ENCODE measurements at regions of chr14 and their contacts with region 1.

Region 1: DNA sequence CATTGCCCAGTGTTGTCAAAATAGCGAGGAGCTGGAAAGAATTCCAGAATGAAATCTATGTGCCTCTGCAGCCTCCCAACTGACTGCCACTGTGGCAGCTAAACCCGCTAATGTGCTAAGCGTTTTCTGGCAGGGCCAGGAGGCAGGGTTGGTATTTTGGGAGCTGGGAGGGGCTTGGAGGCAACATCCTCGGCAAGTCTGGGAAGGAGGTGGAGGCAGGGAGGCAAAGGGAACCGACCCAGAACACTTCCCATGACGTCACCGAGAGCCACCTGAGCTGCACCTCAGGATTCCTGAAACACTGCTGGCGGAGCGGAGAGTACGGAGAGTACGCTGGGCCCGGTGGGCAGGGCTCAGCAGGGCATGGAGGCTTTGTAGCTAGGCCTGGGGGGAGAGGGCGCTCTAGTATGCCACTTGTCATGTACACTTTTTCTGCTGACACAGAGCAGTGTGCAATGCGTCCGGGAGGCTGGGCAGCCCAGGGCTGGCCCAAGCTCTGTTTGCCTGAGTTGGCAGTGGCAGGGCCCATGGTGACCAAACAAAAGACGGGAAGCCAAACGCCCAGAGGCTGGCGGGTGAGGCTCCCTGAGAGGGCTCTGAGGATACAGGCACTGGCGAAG is 81.5 kb downstream of the DPF3 start:
- DNase-seq: no peak
- H3K4me3 Mint-ChIP-seq: no peak overlapping the region
- H3K27ac Mint-ChIP-seq: no peak overlapping the region
- H3K4me1 Mint-ChIP-seq: peaks cover 36% of the 10 kb centered on the region
- H3K27me3 Mint-ChIP-seq: no peaks in the 10 kb centered on the region

Region 2: DNA sequence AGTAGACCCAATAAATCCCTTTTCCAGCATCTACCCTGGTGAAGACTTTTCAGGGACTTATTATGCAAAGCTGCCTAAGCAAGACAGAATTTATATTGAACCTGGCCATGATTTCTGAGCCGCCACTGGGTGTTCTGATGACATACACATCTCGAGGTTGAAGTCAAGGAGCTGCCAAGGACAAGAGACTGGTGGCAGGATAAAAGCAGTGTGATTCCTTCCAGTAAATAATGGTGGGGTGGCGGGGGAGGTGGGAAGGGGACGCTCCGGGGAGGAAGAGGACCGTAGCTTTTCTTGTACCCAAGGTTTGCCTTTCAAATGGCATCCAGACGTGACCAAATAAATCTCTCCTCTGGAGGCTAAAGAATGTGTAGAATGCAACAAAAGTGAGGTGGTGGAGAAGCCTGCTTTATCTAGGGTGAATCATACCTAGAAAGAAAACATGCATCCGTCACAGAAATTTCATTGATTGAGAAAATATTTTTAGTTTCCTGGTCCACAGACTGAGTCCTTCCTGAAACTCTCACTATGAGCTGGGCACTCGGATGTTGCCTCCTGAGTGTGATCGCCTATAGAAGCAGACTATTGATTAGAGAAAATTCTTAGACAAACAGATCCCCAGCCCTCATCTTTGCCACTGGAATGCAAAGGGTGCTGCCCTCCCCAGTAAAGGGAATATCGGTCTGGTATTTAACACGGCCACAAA is 30.8 kb before region 1 on chr14:
- CTCF ChIA-PET with region 1: no interaction called
- POLR2A ChIA-PET with region 1: no interaction called
- intact Hi-C with region 1: no loop called
- DNase-seq: no peak
- H3K4me3 Mint-ChIP-seq: no peak overlapping the region
- H3K27ac Mint-ChIP-seq: no peak overlapping the region
- H3K4me1 Mint-ChIP-seq: peaks cover 3% of the 10 kb centered on the region
- H3K27me3 Mint-ChIP-seq: no peaks in the 10 kb centered on the region

Region 3: GRCh38 chr14:72893636-72894321 is 81.4 kb after region 1 on chr14 and contains the start of gene DPF3:
- CTCF ChIA-PET with region 1: no interaction called
- POLR2A ChIA-PET with region 1: interaction called, 4 read pairs
- intact Hi-C with region 1: loop called (anchors 5 kb)
- DNase-seq: peak; percentile 94
- H3K4me3 Mint-ChIP-seq: peak within 1 kb of the TSS; percentile 88
- H3K27ac Mint-ChIP-seq: peak within 1 kb of the TSS; percentile 40
- H3K4me1 Mint-ChIP-seq: peaks cover 20% of the 10 kb centered on the region
- H3K27me3 Mint-ChIP-seq: peaks cover 43% of the 10 kb centered on the region
- total RNA-seq, gene DPF3: 0.24 to 0.39 TPM